ENCODE measurements at regions of chr6 and their contacts with region 1.

Region 1: GRCh38 chr6:154156135-154156896 is 117.3 kb downstream of the OPRM1 start:
- DNase-seq: peak in 3 of 5 donors; percentile 18 to 34 (median 25)
- ATAC-seq: peak; percentile 55 to 78 (median 68)
- H3K4me3 ChIP-seq: no peak overlapping the region
- H3K27ac ChIP-seq: peak overlapping the region in 1 of 12 donors; percentile 74
- H3K4me1 ChIP-seq: peaks cover 0 to 50% (median 0%) of the 10 kb centered on the region in 12 donors
- H3K27me3 ChIP-seq: no peaks in the 10 kb centered on the region
- CTCF ChIP-seq: peak; percentile 15 to 56 (median 42)
- POLR2A ChIP-seq: no peak

Region 2: DNA sequence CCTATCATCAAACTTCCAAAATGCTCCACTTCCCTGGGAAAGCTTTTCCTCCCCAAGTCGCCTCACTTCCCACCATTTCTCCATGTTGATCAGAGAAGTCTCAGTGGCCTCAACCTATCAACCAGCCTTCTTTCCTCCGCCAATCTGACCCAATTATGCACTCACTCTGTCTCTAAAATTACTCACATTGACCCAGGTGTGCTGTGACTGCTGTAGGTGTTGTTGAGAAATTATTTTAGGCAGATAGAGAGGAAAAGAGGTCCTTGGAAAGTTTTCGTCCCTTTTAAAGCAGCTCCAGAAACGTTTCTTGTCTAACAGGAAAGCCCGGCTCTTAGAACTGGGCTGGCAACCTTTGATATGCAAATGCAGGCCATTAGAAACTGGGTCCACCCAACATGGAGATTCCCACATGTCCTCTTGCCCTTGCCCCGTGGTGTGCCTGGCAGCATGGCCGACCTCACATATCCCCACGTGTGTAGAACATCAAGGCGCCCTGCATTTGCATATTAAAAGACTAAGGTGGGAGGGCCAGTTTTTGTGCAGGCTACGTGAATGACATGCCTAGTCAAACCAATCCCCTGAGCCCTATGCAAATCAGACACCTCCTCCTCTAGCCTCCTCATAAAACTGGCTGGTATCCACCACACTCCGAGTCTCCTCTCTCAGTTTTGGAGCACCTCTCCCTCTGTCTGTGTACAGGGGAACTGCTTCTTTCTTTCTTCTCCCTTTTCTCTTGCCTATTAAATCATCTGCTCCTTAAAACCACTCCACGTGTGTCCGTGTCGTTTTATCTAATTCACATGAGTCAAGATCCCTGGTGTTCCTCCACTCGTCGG is 187.4 kb after region 1 on chr6:
- intact Hi-C with region 1: loop called in 1 of 10 experiments (anchors 10 kb)
- DNase-seq: peak in 4 of 5 donors; percentile 13 to 42 (median 24)
- ATAC-seq: peak; percentile 67 to 92 (median 82)
- H3K4me3 ChIP-seq: peak overlapping the region in 1 of 12 donors; percentile 30
- H3K27ac ChIP-seq: peak overlapping the region in 1 of 12 donors; percentile 54
- H3K4me1 ChIP-seq: peaks cover 0 to 14% (median 0%) of the 10 kb centered on the region in 12 donors
- H3K27me3 ChIP-seq: no peaks in the 10 kb centered on the region
- CTCF ChIP-seq: peak in 5 of 12 donors; percentile 17 to 41 (median 36)
- POLR2A ChIP-seq: no peak

Region 3: GRCh38 chr6:154408891-154409500 is 252.7 kb after region 1 on chr6:
- intact Hi-C with region 1: loop called in 6 of 10 experiments (anchors 2 to 10 kb)
- DNase-seq: peak in 2 of 5 donors; percentile 25 to 36
- ATAC-seq: peak in 3 of 4 donors; percentile 49 to 52 (median 50)
- H3K4me3 ChIP-seq: no peak overlapping the region
- H3K27ac ChIP-seq: peak overlapping the region in 10 of 12 donors; percentile 13 to 88 (median 86)
- H3K4me1 ChIP-seq: peaks cover 0 to 41% (median 21%) of the 10 kb centered on the region in 12 donors
- H3K27me3 ChIP-seq: no peaks in the 10 kb centered on the region
- CTCF ChIP-seq: peak in 9 of 12 donors; percentile 21 to 50 (median 33)
- POLR2A ChIP-seq: no peak

Region 4: DNA sequence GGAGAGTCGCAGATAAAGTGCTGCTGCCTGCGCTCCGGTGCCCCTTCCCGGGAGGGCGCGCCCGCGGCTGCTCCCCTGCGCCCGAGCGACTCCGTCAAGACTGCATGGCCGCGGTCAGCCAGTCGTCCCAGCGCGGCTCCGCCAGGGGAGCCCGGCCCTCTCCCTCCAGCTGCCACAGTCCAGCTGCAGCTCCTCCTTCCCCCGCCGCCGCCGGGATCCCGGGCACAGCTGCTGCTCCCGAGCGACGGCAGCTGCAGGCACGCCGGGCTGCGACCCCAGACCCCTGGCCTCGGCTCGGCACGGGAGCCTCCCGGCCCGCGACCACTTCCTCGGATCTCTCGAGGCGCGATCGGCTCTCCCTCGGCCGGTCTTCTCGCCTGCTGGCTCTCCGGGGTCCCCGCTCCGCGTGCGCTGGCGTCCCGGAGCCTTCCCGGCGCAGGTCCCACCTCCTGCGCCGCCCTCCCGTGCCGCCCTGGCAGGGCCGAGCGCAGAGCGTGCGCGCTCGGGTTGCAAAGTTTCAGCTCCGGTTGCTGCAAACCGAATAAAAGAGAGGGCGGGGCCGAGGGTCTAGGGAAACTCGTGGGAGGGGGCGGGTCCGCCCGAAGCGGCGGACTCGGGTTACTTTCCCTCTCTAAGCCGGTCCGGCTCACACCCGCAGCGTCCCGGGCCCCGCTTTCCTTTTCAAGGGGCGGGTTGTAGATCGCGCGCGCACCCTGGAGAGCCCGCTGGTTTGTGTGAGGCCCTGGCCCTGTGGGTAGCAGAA is 354.0 kb after region 1 on chr6 and contains the start of gene CNKSR3:
- intact Hi-C with region 1: loop called in 1 of 10 experiments (anchors 10 kb)
- DNase-seq: peak; percentile 87 to 91 (median 89)
- ATAC-seq: peak; percentile 83 to 93 (median 90)
- H3K4me3 ChIP-seq: peak within 1 kb of the TSS; percentile 56 to 91 (median 82)
- H3K27ac ChIP-seq: peak within 1 kb of the TSS; percentile 70 to 98 (median 91)
- H3K4me1 ChIP-seq: peaks cover 0 to 36% (median 16%) of the 10 kb centered on the region in 12 donors
- H3K27me3 ChIP-seq: peaks cover 0 to 22% (median 0%) of the 10 kb centered on the region in 9 donors
- CTCF ChIP-seq: peak in 4 of 12 donors; percentile 3 to 25 (median 12)
- POLR2A ChIP-seq: peak in 1 of 2 donors; percentile 85
- total RNA-seq, gene CNKSR3: 9.6 to 30.7 (median 22.9) TPM

Region 5: DNA sequence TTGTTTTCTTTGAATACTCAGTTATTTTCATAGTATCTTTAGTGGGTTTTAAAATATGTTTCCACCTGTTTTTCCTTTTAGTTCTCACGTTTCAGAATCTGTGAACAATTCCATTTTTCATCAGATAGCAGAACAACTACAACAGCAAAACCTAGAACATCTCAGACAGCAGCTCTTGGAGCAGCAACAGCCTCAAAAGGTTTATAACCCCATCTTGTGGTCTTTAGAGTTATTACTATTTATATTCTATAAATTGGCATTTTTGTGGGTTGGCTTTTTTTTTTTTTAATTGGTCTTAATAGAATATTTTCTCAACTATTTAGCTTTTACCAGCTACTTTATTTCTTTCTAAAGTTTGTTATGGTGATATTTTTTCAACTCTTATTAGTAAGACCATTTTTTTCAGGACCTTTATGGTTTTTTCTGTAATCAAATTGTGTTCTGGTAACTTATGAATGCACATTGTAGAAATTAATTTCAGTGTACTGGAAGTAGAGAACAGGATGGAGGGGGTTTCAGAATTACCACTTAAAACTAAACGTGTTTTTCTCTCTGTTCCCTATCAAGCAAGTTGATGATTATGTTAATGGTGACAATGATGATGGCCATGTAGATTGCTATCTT is 649.1 kb after region 1 on chr6:
- intact Hi-C with region 1: loop called in 1 of 10 experiments (anchors 10 kb)
- DNase-seq: no peak
- ATAC-seq: peak in 1 of 4 donors; percentile 53
- H3K4me3 ChIP-seq: no peak overlapping the region
- H3K27ac ChIP-seq: no peak overlapping the region
- H3K4me1 ChIP-seq: peaks cover 0 to 7% (median 0%) of the 10 kb centered on the region in 12 donors
- H3K27me3 ChIP-seq: no peaks in the 10 kb centered on the region
- CTCF ChIP-seq: peak; percentile 31 to 69 (median 57)
- POLR2A ChIP-seq: no peak

Measured in heart left ventricle (tissue), 16 donors.